ENCODE measurements at regions of chr12 and their contacts with region 1.

Region 1: GRCh38 chr12:110117956-110118685 is 6.0 kb upstream of the IFT81 start:
- DNase-seq: no peak
- H3K4me3 ChIP-seq: no peak overlapping the region
- H3K27ac ChIP-seq: peak overlapping the region; percentile 37 to 73 (median 68)
- H3K4me1 ChIP-seq: peaks cover 0 to 14% (median 0%) of the 10 kb centered on the region in 3 donors
- H3K27me3 ChIP-seq: no peaks in the 10 kb centered on the region
- CTCF ChIP-seq: no peak
- POLR2A ChIP-seq: no peak

Region 2: DNA sequence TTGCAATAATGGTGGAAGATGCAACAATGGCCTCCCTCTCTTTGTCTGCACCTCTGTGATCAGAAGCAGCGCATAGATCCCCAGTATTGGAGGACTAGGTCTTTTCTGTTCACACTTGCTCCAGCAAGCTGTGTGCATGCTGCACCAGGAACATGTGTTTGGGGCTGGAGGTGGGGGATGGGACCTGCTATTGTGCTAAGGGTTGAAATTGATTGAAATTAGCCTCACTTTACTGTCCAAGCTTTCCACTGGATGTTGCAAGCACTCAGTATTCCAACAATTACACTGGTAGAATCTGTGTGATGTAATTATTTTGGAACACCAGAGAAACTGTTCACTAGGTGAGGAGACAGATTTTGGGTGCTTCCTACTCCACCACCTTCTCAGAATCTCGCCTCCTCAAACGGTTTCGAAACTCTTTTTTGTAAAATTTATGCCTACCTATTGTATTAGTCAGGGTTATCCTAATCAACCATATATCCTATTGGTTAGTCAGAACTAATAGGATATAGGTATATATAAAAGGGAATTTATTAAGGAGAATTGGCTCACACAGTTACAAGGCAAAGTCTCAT is 41.6 kb after region 1 on chr12:
- intact Hi-C with region 1: no loop called
- DNase-seq: no peak
- H3K4me3 ChIP-seq: no peak overlapping the region
- H3K27ac ChIP-seq: no peak overlapping the region
- H3K4me1 ChIP-seq: peaks cover 0 to 6% (median 0%) of the 10 kb centered on the region in 3 donors
- H3K27me3 ChIP-seq: no peaks in the 10 kb centered on the region
- CTCF ChIP-seq: no peak
- POLR2A ChIP-seq: no peak

Region 3: GRCh38 chr12:110224379-110225304 is 106.5 kb after region 1 on chr12:
- intact Hi-C with region 1: loop called (anchors 10 kb)
- DNase-seq: no peak
- H3K4me3 ChIP-seq: peak overlapping the region in 3 of 4 donors; percentile 18 to 52 (median 24)
- H3K27ac ChIP-seq: peak overlapping the region; percentile 70 to 83 (median 81)
- H3K4me1 ChIP-seq: peaks cover 0 to 29% (median 15%) of the 10 kb centered on the region in 3 donors
- H3K27me3 ChIP-seq: no peaks in the 10 kb centered on the region
- CTCF ChIP-seq: peak in 4 of 6 experiments; percentile 52 to 64 (median 52)
- POLR2A ChIP-seq: no peak

Measured in esophagus squamous epithelium (tissue), 5 donors.